Activated T-helper 2 cell treated with anti-CD3 and anti-CD28 coated beads, Interferon-gamma antibody, Interleukin-2, Interleukin-4, amounts not matched to agents 10 μg/mL and 5 μg/mL and 100 μg/mL, durations not matched to agents 14 hours and 24 hours and 36 hours (primary cell): ENCODE measurements at regions of chr16 and their contacts with region 1.

Region 1: GRCh38 chr16:53892155-53892554 is 188.2 kb downstream of the FTO start:
- DNase-seq: peak; percentile 52
- H3K4me3 Mint-ChIP-seq: peak overlapping the region; percentile 5
- H3K27ac Mint-ChIP-seq: peak overlapping the region; percentile 60
- H3K4me1 Mint-ChIP-seq: peaks cover 42% of the 10 kb centered on the region
- H3K27me3 Mint-ChIP-seq: no peaks in the 10 kb centered on the region

Region 2: GRCh38 chr16:53872248-53873221 is 19.6 kb before region 1 on chr16:
- intact Hi-C with region 1: loop called (anchors 2 kb)
- DNase-seq: no peak
- H3K4me3 Mint-ChIP-seq: peak overlapping the region; percentile 11
- H3K27ac Mint-ChIP-seq: peak overlapping the region; percentile 82
- H3K4me1 Mint-ChIP-seq: peaks cover 26% of the 10 kb centered on the region
- H3K27me3 Mint-ChIP-seq: no peaks in the 10 kb centered on the region